ENCODE measurements at regions of chr7 and their contacts with region 1.

Region 1: GRCh38 chr7:24819916-24820689 is 62.8 kb upstream of the GSDME start:
- DNase-seq: peak; percentile 77 to 81
- H3K4me3 ChIP-seq: peak overlapping the region; percentile 22; the same call in 1 of the 2 replicates
- H3K27ac ChIP-seq: peak overlapping the region; percentile 97
- H3K4me1 ChIP-seq: peaks cover 47% of the 10 kb centered on the region
- H3K27me3 ChIP-seq: no peaks in the 10 kb centered on the region
- CTCF ChIP-seq: peak; percentile 99

Region 2: DNA sequence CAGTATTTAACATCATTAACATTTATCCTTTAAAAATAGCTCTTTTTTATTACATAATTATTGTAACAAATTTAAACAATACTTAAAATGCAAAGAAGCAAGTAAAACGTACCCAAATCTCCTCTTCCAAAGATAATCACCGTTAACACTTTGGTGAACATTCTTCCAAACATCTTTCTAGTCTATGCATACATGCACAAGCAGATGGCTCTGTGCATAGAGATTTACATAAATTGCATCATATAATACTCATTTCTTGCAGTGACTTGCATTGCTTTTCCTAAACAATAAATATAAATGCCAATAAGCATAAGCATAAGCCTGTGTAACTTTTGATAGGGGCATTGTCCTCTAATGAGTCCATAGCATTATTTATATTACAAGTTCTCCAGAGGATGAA is 336.3 kb before region 1 on chr7:
- CTCF ChIA-PET with region 1: no interaction called
- POLR2A ChIA-PET with region 1: no interaction called
- intact Hi-C with region 1: no loop called
- DNase-seq: no peak
- H3K4me3 ChIP-seq: no peak overlapping the region
- H3K27ac ChIP-seq: no peak overlapping the region
- H3K4me1 ChIP-seq: peaks cover 2% of the 10 kb centered on the region
- H3K27me3 ChIP-seq: no peaks in the 10 kb centered on the region
- CTCF ChIP-seq: no peak

Region 3: GRCh38 chr7:24907311-24907886 is 87.3 kb after region 1 on chr7:
- CTCF ChIA-PET with region 1: interaction called, 3 read pairs
- POLR2A ChIA-PET with region 1: no interaction called
- intact Hi-C with region 1: loop called (anchors 1 kb)
- DNase-seq: peak; percentile 47 to 88
- H3K4me3 ChIP-seq: peak overlapping the region; percentile 21
- H3K27ac ChIP-seq: peak overlapping the region; percentile 86
- H3K4me1 ChIP-seq: peaks cover 58% of the 10 kb centered on the region
- H3K27me3 ChIP-seq: no peaks in the 10 kb centered on the region
- CTCF ChIP-seq: no peak

Region 4: DNA sequence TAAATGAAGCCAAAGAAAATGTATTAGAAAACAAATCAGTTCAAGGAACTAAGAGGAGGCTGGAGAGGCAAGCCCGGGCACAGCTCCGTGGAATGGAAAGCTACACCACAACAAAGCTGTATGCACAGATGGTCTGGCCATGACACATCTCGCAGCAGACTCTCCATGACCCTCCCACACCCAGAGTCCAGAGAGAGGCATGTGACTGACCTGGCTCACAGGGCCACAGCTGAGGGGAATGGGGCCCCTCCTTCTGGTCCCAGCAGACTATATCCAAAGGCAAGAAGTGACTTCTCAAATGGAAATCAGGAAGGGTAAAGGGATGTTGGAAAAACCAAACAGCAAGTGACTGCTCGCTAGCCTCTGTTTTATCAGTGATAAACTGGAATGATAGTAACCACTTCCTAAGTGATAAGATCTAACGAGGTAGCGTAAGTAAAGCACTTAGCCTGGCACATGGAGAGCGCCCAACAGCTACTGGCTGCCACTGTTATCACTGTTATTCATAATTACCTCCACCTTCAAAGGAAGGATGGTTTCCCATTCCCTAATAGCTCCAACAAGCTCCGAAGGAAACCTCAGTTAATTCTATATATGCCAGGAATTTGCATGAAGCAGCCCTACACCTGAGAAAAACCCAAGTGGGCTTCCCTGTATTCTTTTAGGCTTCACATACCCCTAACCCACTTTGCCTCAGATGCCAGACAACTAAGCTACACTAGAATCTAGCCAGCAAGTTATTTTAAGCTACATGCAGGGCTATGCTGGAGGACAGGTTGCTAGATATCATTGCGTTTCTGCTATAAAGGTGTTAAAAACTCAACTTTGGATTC is 151.4 kb after region 1 on chr7:
- CTCF ChIA-PET with region 1: no interaction called
- POLR2A ChIA-PET with region 1: no interaction called
- intact Hi-C with region 1: loop called (anchors 2 kb)
- DNase-seq: peak; percentile 76 to 85
- H3K4me3 ChIP-seq: no peak overlapping the region
- H3K27ac ChIP-seq: peak overlapping the region; percentile 10; the same call in 1 of the 2 replicates
- H3K4me1 ChIP-seq: peaks cover 57% of the 10 kb centered on the region
- H3K27me3 ChIP-seq: no peaks in the 10 kb centered on the region
- CTCF ChIP-seq: no peak

Region 5: GRCh38 chr7:25069900-25070443 is 249.9 kb after region 1 on chr7:
- CTCF ChIA-PET with region 1: no interaction called
- POLR2A ChIA-PET with region 1: no interaction called
- intact Hi-C with region 1: loop called (anchors 1 kb)
- DNase-seq: peak; percentile 67 to 76
- H3K4me3 ChIP-seq: no peak overlapping the region
- H3K27ac ChIP-seq: no peak overlapping the region
- H3K4me1 ChIP-seq: peaks cover 5% of the 10 kb centered on the region
- H3K27me3 ChIP-seq: no peaks in the 10 kb centered on the region
- CTCF ChIP-seq: peak; percentile 96